Mammary epithelial cell (primary cell): ENCODE measurements at regions of chr3 and their contacts with region 1.

Region 1: DNA sequence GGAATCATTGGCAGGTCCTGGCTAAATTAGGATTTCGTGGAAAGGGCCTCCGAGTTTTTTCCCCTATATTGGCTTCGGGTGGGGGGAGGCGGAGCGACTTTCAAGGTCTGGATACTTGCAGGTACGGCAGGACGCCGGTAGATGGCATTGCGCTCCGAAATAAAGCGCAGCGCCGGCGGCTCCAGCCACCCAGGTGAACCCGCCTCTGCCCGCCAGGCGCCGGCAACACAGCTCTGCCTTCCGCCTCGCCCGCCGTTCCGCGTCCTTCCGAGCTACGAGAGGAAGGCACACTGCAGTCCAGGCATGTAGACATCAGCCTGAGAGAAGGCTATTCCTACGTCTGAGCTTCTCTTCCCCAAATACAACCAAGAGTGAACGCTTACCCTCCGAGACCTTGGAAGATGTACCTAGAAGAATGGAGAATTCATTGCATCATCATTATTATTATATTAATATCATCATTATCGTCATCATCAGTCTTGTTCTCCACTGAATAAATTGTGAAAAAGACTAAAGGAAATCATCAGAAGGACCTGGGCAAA is 514.1 kb downstream of the MECOM start:
- DNase-seq: peak; percentile 81
- H3K4me3 ChIP-seq: peak overlapping the region; percentile 45 to 55 (median 54)
- H3K27ac ChIP-seq: peak overlapping the region; percentile 30
- H3K4me1 ChIP-seq: peaks cover 15% of the 10 kb centered on the region
- H3K27me3 ChIP-seq: no peaks in the 10 kb centered on the region
- CTCF ChIP-seq: peak; percentile 70 to 85

Region 2: DNA sequence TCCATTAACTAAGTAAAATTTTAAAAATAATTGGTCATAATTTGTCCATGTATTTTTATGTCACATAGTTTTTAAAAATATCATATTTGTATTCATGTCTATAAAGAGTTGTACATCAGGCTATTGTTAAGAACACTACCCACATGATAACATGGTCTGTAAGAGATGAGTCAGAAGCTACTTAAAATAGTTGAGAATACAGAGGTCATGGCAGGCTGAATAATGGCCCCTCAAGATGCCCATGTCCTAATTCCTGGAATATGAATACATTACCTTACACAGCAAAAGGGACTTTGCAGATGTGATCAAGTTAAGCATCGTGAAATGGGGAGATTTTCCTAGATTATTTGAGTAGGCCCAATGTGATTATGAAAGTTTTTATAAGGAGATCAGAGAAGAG is 270.8 kb before region 1 on chr3:
- CTCF ChIA-PET with region 1: interaction called, 11 read pairs
- dilution Hi-C with region 1: no loop called
- in situ Hi-C with region 1: loop called in 1 of 2 experiments (anchors 25 kb)
- intact Hi-C with region 1: no loop called
- DNase-seq: peak; percentile 39
- H3K4me3 ChIP-seq: no peak overlapping the region
- H3K27ac ChIP-seq: no peak overlapping the region
- H3K4me1 ChIP-seq: peaks cover 20% of the 10 kb centered on the region
- H3K27me3 ChIP-seq: no peaks in the 10 kb centered on the region
- CTCF ChIP-seq: no peak

Region 3: DNA sequence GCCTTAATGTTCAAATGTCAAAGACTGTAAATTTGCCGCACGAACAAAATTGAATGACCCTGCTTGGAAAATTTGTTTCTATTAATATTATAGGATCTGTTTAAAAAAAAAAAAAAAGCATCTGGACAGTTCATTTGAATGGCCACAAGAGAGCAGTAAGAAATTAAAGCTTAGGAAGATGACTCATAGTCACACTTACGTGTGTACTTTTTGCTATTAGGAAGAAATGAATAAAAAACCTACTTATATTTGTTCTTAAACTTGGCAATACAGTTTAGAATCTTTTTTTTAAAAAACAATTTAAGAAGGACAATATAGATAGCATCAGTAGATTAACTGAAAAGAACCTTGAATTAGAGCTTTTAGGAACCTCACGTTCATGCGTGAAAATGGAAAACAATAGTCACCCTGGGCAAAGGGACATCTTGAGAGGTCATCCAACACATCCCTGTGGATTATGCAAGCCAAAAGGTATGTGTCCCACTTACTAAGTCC is 107.7 kb before region 1 on chr3:
- CTCF ChIA-PET with region 1: no interaction called
- dilution Hi-C with region 1: no loop called
- in situ Hi-C with region 1: loop called in 1 of 2 experiments (anchors 25 kb)
- intact Hi-C with region 1: loop called (anchors 2 kb)
- DNase-seq: peak; percentile 43
- H3K4me3 ChIP-seq: no peak overlapping the region
- H3K27ac ChIP-seq: peak overlapping the region; percentile 37
- H3K4me1 ChIP-seq: peaks cover 33% of the 10 kb centered on the region
- H3K27me3 ChIP-seq: no peaks in the 10 kb centered on the region
- CTCF ChIP-seq: peak; percentile 63 to 68

Region 4: GRCh38 chr3:169104972-169105970 is 44.1 kb before region 1 on chr3:
- CTCF ChIA-PET with region 1: no interaction called
- dilution Hi-C with region 1: no loop called
- in situ Hi-C with region 1: no loop called
- intact Hi-C with region 1: no loop called
- DNase-seq: no peak
- H3K4me3 ChIP-seq: no peak overlapping the region
- H3K27ac ChIP-seq: peak overlapping the region; percentile 18
- H3K4me1 ChIP-seq: peaks cover 9% of the 10 kb centered on the region
- H3K27me3 ChIP-seq: no peaks in the 10 kb centered on the region
- CTCF ChIP-seq: no peak

Region 5: GRCh38 chr3:169390271-169391230 is 241.1 kb after region 1 on chr3:
- CTCF ChIA-PET with region 1: no interaction called
- dilution Hi-C with region 1: no loop called
- in situ Hi-C with region 1: no loop called
- intact Hi-C with region 1: loop called (anchors 1 kb)
- DNase-seq: peak; percentile 49
- H3K4me3 ChIP-seq: no peak overlapping the region
- H3K27ac ChIP-seq: no peak overlapping the region
- H3K4me1 ChIP-seq: no peaks in the 10 kb centered on the region
- H3K27me3 ChIP-seq: no peaks in the 10 kb centered on the region
- CTCF ChIP-seq: peak; percentile 18 to 57

Region 6: GRCh38 chr3:169489775-169490546 is 340.5 kb after region 1 on chr3:
- CTCF ChIA-PET with region 1: no interaction called
- dilution Hi-C with region 1: no loop called
- in situ Hi-C with region 1: no loop called
- intact Hi-C with region 1: no loop called
- DNase-seq: no peak
- H3K4me3 ChIP-seq: no peak overlapping the region
- H3K27ac ChIP-seq: no peak overlapping the region
- H3K4me1 ChIP-seq: no peaks in the 10 kb centered on the region
- H3K27me3 ChIP-seq: no peaks in the 10 kb centered on the region
- CTCF ChIP-seq: no peak

Region 7: GRCh38 chr3:169591983-169592644 is 442.7 kb after region 1 on chr3:
- CTCF ChIA-PET with region 1: no interaction called
- dilution Hi-C with region 1: no loop called
- in situ Hi-C with region 1: no loop called
- intact Hi-C with region 1: loop called (anchors 5 kb)
- DNase-seq: peak; percentile 55
- H3K4me3 ChIP-seq: no peak overlapping the region
- H3K27ac ChIP-seq: no peak overlapping the region
- H3K4me1 ChIP-seq: no peaks in the 10 kb centered on the region
- H3K27me3 ChIP-seq: no peaks in the 10 kb centered on the region
- CTCF ChIP-seq: no peak

Region 8: GRCh38 chr3:169744366-169745054 is 595.1 kb after region 1 on chr3:
- CTCF ChIA-PET with region 1: no interaction called
- dilution Hi-C with region 1: no loop called
- in situ Hi-C with region 1: no loop called
- intact Hi-C with region 1: loop called (anchors 2 kb)
- DNase-seq: peak; percentile 13
- H3K4me3 ChIP-seq: no peak overlapping the region
- H3K27ac ChIP-seq: no peak overlapping the region
- H3K4me1 ChIP-seq: peaks cover 11% of the 10 kb centered on the region
- H3K27me3 ChIP-seq: no peaks in the 10 kb centered on the region
- CTCF ChIP-seq: peak in 1 of 2 donors; percentile 13